ENCODE measurements at regions of chr9 and their contacts with region 1.

Region 1: GRCh38 chr9:29659014-29659413 is 2085.7 kb upstream of the C9orf72 start:
- DNase-seq: no peak
- H3K4me3 ChIP-seq: no peak overlapping the region
- H3K27ac ChIP-seq: no peak overlapping the region
- H3K4me1 ChIP-seq: no peaks in the 10 kb centered on the region
- H3K27me3 ChIP-seq: no peaks in the 10 kb centered on the region
- CTCF ChIP-seq: no peak

Region 2: DNA sequence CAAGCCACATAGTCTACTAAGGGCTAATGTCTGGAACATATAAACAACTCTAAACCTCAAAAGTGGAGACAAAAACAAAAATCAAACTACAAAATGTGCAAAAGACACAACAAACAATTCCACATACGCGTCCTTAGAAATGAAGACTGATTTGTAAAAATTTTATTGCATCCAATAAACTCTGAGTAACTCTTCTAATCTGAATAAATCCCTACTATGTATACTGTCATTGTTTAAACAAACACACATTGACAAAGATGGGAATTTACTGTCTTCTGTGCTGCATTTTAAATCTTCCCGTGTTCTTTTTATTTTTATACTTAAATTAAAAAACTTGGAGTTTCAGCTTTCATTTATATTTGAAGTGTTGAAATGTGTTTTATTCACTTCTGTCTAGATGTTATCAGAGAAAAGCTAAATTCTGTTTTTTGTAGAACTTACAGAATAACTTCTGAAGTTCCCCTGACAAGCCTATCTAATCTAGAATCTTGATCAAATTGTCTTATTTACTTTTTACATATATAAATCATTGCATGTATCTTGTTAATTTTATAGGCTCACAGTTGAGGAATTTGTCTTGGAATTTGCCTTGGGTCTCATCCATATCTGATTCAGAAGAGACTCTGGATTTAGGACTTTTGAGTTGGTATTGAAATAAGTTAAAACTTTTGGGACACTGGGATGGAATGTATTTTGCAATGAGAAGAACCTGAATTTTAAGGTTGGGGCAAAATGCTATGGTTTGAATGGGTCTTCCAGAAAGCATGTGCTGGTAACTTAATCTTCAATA is 21.4 kb before region 1 on chr9:
- CTCF ChIA-PET with region 1: no interaction called
- POLR2A ChIA-PET with region 1: interaction called, 15 read pairs
- intact Hi-C with region 1: no loop called
- DNase-seq: no peak
- H3K4me3 ChIP-seq: no peak overlapping the region
- H3K27ac ChIP-seq: no peak overlapping the region
- H3K4me1 ChIP-seq: no peaks in the 10 kb centered on the region
- H3K27me3 ChIP-seq: no peaks in the 10 kb centered on the region
- CTCF ChIP-seq: no peak

Region 3: GRCh38 chr9:29730163-29730562 is 71.1 kb after region 1 on chr9:
- CTCF ChIA-PET with region 1: no interaction called
- POLR2A ChIA-PET with region 1: no interaction called
- intact Hi-C with region 1: no loop called
- DNase-seq: no peak
- H3K4me3 ChIP-seq: no peak overlapping the region
- H3K27ac ChIP-seq: no peak overlapping the region
- H3K4me1 ChIP-seq: no peaks in the 10 kb centered on the region
- H3K27me3 ChIP-seq: no peaks in the 10 kb centered on the region
- CTCF ChIP-seq: no peak